PC-3 (cell line): ENCODE measurements at regions of chr1 and their contacts with region 1.

Region 1: DNA sequence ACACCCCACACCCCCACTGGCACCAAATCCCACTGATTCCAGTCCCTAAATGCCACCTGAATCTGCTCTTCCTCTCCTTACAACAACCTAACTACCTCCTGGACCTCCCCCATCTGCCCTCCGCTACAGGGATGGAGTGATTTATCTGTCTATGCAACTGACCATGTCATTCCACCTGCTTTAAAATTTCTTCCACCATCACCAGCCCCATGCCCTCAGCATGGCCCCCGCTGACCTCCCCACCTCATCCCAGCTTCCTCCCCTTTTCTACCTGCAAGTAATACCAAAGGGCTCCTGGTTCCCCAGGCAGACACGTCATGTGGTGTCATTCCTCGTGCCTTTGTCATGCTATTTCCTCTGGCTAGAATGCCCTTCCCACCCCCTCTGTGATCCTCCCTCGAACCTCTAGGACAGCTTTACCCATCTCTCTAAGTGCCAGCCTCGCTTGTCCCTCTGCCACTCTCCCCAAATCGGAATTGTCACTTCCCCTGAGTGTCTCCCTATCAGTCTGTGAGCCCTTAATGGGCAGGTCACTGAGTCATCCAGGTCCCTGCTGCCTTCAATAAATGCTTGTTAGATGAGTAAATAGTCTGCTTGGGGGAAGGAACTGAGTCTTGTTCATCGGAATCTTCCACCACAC is 3.7 kb downstream of the GJB4 start:
- DNase-seq: peak; percentile 96
- ATAC-seq: peak; percentile 86
- H3K4me3 ChIP-seq: peak overlapping the region; percentile 51; the same call in 1 of the 2 replicates
- H3K27ac ChIP-seq: peak overlapping the region; percentile 96
- H3K4me1 ChIP-seq: peaks cover 36% of the 10 kb centered on the region
- H3K27me3 ChIP-seq: no peaks in the 10 kb centered on the region
- CTCF ChIP-seq: no peak

Region 2: DNA sequence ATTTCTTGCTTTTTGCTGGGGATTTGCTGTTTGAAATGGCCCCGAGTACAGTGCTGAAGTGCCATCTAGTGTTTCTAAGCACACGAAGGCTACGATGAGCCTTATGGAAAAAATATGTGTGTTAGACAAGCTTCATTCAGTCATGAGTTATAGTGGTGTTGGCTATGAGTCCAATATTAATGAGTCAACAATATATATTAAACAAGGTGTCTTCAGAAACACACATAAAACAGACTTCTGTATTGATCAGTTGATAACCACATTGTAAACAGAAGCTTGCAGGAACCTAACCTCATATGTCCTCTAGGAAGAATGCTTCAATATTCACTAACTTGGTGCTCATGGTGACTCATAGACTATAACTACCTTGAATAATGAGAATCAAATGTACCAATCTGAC is 10.1 kb before region 1 on chr1:
- CTCF ChIA-PET with region 1: no interaction called
- POLR2A ChIA-PET with region 1: no interaction called
- intact Hi-C with region 1: loop called (anchors 1 kb)
- DNase-seq: peak; percentile 81
- ATAC-seq: peak; percentile 74
- H3K4me3 ChIP-seq: no peak overlapping the region
- H3K27ac ChIP-seq: peak overlapping the region; percentile 91
- H3K4me1 ChIP-seq: peaks cover 34% of the 10 kb centered on the region
- H3K27me3 ChIP-seq: no peaks in the 10 kb centered on the region
- CTCF ChIP-seq: peak; percentile 63

Region 3: GRCh38 chr1:34779526-34779925 is 16.3 kb after region 1 on chr1:
- CTCF ChIA-PET with region 1: interaction called, 3 read pairs
- POLR2A ChIA-PET with region 1: interaction called, 3 read pairs
- intact Hi-C with region 1: loop called (anchors 2 kb)
- DNase-seq: peak; percentile 88
- ATAC-seq: peak; percentile 44
- H3K4me3 ChIP-seq: peak overlapping the region; percentile 15; the same call in 1 of the 2 replicates
- H3K27ac ChIP-seq: peak overlapping the region; percentile 94
- H3K4me1 ChIP-seq: peaks cover 56% of the 10 kb centered on the region
- H3K27me3 ChIP-seq: no peaks in the 10 kb centered on the region
- CTCF ChIP-seq: no peak